Endothelial cell of umbilical vein (primary cell): ENCODE measurements at regions of chr22 and their contacts with region 1.

Region 1: DNA sequence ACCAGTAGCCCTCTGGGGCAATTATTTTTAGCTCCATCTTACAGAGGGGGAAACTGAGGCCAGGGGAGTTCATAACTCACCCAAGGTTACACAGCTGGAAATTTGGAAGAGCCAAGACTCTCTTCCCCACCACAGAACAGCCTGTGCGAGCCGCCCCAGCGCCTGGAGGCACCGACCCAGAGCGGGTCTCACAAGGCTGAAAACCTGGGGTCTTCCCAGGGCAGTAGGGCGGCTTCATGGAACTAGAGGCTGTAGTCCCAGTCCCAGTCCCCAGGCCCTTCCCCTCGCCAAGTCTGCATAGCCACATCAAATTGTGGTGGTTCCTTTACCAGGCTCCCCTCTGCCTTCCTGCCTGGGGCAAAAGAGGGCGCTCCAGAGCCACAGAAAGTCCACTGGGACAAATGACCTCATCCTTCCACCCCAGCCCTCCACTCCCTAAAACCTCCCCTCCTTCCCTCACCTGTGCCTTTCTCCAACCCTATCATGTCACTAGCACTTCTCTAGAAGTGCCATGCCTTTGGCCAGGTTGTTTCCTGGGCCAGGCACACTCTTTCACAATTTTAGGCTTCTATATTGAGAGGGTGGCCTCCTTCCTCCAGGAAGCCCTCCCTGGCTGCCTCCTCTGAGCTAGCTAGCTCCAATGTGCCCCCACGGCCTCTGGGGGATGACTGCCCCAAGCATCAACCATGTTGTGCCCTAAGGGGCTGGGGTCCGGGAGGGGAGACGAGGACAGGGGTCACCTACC is 15.2 kb upstream of the CDC42EP1 start:
- DNase-seq: peak; percentile 80
- H3K4me3 ChIP-seq: no peak overlapping the region
- H3K27ac ChIP-seq: peak overlapping the region; percentile 91
- H3K4me1 ChIP-seq: peaks cover 22% of the 10 kb centered on the region
- H3K27me3 ChIP-seq: no peaks in the 10 kb centered on the region
- CTCF ChIP-seq: peak; percentile 88 to 91
- POLR2A ChIP-seq: no peak

Region 2: DNA sequence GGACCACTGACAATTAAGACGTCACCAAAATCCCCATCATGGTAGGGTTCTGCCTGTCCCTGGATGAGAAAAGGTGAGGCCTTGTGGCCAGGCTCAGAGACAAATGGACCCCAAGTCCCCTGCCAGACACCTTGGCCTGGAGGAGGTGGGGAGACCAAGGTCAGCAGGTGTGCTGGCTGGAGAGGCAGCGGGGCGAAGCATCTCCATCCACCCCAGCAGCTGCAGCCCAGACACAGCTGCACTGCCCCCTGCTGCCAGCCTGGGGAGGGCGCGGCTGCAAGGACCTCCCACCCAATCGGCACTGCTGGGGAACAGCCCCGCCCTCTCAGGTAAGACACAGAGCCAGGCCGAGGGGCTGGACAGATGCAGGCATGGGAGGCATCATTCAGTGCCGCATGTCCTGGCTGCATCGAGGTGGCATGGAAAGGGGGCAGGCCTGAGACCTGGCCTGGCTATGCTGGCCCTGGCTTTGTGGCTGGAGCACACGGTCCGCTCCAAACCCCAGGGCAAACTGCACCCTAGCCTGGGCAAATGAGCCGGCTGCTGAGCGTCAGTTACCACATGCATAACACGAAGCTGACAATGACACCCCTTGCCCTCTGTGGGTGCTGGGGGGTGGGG is 46.7 kb before region 1 on chr22:
- CTCF ChIA-PET with region 1: no interaction called
- POLR2A ChIA-PET with region 1: no interaction called
- dilution Hi-C with region 1: no loop called
- intact Hi-C with region 1: no loop called
- DNase-seq: peak; percentile 20
- H3K4me3 ChIP-seq: no peak overlapping the region
- H3K27ac ChIP-seq: no peak overlapping the region
- H3K4me1 ChIP-seq: peaks cover 51% of the 10 kb centered on the region
- H3K27me3 ChIP-seq: no peaks in the 10 kb centered on the region
- CTCF ChIP-seq: peak; percentile 51 to 72
- POLR2A ChIP-seq: no peak

Region 3: DNA sequence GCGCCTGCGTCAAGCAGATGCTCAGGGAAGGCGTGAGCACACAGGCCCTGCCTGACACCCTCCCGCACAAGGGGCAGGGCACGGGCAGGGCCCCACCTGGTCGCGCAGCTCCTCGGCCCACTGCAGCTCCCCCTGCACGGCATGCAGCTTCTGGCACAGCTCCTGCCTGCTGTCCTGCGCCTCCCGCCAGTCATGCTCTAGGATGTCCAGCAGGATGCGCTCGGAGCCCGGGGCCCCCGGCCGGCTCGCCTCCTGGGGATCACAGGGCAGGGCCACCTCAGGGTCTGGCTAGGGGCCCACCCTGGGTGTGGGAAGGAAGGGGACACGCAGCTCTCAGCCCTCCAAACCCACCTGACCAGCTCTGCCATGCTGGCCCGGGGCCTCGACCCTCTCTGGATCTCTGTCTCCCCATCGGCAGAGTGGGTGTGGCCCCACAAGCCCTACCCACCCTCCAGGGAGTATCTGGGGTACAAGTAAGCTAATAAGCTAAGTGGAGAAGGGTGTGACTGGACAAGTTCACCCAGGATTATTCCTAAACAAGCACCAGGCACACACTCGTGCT is 36.6 kb before region 1 on chr22:
- CTCF ChIA-PET with region 1: no interaction called
- POLR2A ChIA-PET with region 1: no interaction called
- dilution Hi-C with region 1: no loop called
- intact Hi-C with region 1: no loop called
- DNase-seq: no peak
- H3K4me3 ChIP-seq: no peak overlapping the region
- H3K27ac ChIP-seq: peak overlapping the region; percentile 76
- H3K4me1 ChIP-seq: peaks cover 31% of the 10 kb centered on the region
- H3K27me3 ChIP-seq: no peaks in the 10 kb centered on the region
- CTCF ChIP-seq: peak; percentile 5 to 13
- POLR2A ChIP-seq: no peak

Region 4: GRCh38 chr22:37561212-37562048 is 16.3 kb after region 1 on chr22:
- CTCF ChIA-PET with region 1: interaction called, 977 read pairs
- POLR2A ChIA-PET with region 1: interaction called, 17 read pairs
- dilution Hi-C with region 1: no loop called
- intact Hi-C with region 1: loop called (anchors 1 kb)
- DNase-seq: peak; percentile 88
- H3K4me3 ChIP-seq: peak overlapping the region; percentile 71 to 86 (median 74)
- H3K27ac ChIP-seq: peak overlapping the region; percentile 99
- H3K4me1 ChIP-seq: peaks cover 61% of the 10 kb centered on the region
- H3K27me3 ChIP-seq: no peaks in the 10 kb centered on the region
- CTCF ChIP-seq: peak; percentile 94
- POLR2A ChIP-seq: peak; percentile 47